ENCODE measurements at regions of chr9 and their contacts with region 1.

Region 1: GRCh38 chr9:81588148-81588871 is 101.0 kb downstream of the TLE1 start:
- DNase-seq: peak in 1 of 2 experiments; percentile 8
- H3K4me3 ChIP-seq: no peak overlapping the region
- H3K4me3 Mint-ChIP-seq: no peak overlapping the region
- H3K27ac Mint-ChIP-seq: no peak overlapping the region
- H3K4me1 ChIP-seq: no peaks in the 10 kb centered on the region
- H3K4me1 Mint-ChIP-seq: no peaks in the 10 kb centered on the region
- H3K27me3 ChIP-seq: no peaks in the 10 kb centered on the region
- H3K27me3 Mint-ChIP-seq: no peaks in the 10 kb centered on the region
- CTCF ChIP-seq: no peak

Region 2: GRCh38 chr9:81526587-81526986 is 61.7 kb before region 1 on chr9:
- CTCF ChIA-PET with region 1: no interaction called
- POLR2A ChIA-PET with region 1: no interaction called
- intact Hi-C with region 1: no loop called
- DNase-seq: no peak
- H3K4me3 ChIP-seq: no peak overlapping the region
- H3K4me3 Mint-ChIP-seq: no peak overlapping the region
- H3K27ac Mint-ChIP-seq: no peak overlapping the region
- H3K4me1 ChIP-seq: no peaks in the 10 kb centered on the region
- H3K4me1 Mint-ChIP-seq: peaks cover 8% of the 10 kb centered on the region
- H3K27me3 ChIP-seq: no peaks in the 10 kb centered on the region
- H3K27me3 Mint-ChIP-seq: no peaks in the 10 kb centered on the region
- CTCF ChIP-seq: no peak

Region 3: DNA sequence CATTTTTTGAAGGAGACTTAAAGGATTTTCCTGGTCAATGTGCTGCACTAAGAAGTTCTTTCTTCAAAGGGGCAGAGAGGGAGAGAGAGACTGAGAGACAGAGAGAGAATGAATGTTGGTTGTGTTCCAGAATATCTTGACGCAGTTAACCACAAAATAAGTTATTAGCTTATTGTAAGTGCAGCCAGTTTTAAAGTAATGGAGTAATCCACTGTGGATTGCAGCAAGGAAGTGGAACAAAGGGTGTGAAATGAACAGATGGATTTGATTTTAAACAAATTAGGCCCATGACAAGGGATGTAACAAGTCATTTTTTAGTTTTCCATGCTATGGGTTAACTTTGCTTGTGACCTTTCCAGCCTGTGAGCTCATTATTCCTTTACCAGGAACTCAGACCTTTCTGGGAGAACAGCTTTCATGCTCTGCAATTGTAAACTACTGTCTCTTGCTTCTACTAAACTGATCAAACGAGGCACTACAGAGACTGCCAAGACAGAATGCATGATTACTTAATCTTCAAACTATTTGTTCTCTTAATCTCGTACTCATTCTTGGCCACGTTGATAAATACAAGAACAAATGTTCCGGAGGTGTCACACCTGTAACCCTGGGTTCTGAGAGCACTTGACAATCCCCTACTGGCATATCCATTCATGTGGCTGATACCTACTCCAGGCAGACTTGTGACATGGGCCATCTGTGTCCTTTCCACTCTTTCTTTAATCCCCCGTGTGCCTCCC is 30.0 kb before region 1 on chr9:
- CTCF ChIA-PET with region 1: no interaction called
- POLR2A ChIA-PET with region 1: no interaction called
- intact Hi-C with region 1: no loop called
- DNase-seq: peak in 1 of 2 experiments; percentile 1
- H3K4me3 ChIP-seq: no peak overlapping the region
- H3K4me3 Mint-ChIP-seq: no peak overlapping the region
- H3K27ac Mint-ChIP-seq: no peak overlapping the region
- H3K4me1 ChIP-seq: no peaks in the 10 kb centered on the region
- H3K4me1 Mint-ChIP-seq: peaks cover 14% of the 10 kb centered on the region
- H3K27me3 ChIP-seq: no peaks in the 10 kb centered on the region
- H3K27me3 Mint-ChIP-seq: no peaks in the 10 kb centered on the region
- CTCF ChIP-seq: no peak

Region 4: DNA sequence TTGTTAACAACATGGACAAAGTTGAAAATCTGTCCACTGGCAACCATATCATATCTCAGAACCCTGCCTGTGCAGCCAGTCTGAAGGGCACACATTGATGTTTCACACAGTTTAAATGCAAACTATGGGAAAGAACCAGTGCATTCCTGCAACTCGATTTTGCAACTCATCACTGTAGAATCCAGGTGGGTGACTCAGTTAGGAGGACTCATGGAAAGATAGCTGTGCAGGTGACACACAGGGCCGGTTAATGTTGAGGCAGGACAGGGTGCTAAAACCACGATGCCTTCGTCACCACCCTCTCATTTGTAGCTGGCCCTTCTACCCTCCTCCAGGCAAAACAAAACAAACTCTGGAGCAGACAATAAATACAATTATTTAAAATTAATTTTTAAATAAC is 38.2 kb after region 1 on chr9:
- CTCF ChIA-PET with region 1: no interaction called
- POLR2A ChIA-PET with region 1: no interaction called
- intact Hi-C with region 1: loop called (anchors 5 kb)
- DNase-seq: peak in 1 of 2 experiments; percentile 2
- H3K4me3 ChIP-seq: no peak overlapping the region
- H3K4me3 Mint-ChIP-seq: no peak overlapping the region
- H3K27ac Mint-ChIP-seq: no peak overlapping the region
- H3K4me1 ChIP-seq: no peaks in the 10 kb centered on the region
- H3K4me1 Mint-ChIP-seq: no peaks in the 10 kb centered on the region
- H3K27me3 ChIP-seq: no peaks in the 10 kb centered on the region
- H3K27me3 Mint-ChIP-seq: no peaks in the 10 kb centered on the region
- CTCF ChIP-seq: no peak